ENCODE measurements at regions of chr5 and their contacts with region 1.

Region 1: DNA sequence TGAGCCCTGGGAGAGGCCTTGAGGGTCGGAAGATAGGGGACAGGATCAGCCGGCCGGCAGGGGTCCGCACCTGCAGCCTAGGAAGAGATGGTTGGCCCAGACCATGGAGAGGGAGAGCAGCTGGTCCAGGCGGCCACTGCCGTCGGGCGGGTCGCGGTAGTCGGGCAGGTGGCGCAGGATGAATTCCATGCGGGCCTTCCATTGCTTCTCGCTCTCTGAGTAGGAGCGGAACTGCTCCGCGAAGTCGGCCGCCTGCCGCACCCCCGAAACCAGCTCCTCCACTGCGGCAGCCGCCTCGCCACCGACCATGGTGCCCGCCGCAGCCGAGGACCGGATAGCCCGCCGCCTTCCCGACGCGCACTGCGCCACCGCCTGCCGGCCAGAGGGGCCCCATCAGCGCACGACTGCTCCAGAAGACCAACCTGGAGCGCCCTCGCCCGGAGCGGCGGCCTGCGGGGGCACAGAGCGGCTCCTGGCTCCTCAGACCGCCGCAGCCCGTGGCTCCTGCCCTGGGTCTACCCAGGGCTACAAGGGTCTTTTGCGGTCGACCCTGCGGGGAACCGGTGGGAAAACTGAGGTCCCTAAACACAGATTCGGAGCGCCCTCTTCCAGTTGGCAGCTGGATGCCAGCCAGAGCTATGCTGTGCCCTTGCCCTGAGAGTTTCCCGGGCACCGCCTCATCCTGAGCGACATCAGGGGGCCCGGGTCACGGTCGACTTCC is at the start of gene CDKN2AIPNL:
- DNase-seq: peak; percentile 96
- total RNA-seq, gene CDKN2AIPNL: 27.2 TPM

Region 2: DNA sequence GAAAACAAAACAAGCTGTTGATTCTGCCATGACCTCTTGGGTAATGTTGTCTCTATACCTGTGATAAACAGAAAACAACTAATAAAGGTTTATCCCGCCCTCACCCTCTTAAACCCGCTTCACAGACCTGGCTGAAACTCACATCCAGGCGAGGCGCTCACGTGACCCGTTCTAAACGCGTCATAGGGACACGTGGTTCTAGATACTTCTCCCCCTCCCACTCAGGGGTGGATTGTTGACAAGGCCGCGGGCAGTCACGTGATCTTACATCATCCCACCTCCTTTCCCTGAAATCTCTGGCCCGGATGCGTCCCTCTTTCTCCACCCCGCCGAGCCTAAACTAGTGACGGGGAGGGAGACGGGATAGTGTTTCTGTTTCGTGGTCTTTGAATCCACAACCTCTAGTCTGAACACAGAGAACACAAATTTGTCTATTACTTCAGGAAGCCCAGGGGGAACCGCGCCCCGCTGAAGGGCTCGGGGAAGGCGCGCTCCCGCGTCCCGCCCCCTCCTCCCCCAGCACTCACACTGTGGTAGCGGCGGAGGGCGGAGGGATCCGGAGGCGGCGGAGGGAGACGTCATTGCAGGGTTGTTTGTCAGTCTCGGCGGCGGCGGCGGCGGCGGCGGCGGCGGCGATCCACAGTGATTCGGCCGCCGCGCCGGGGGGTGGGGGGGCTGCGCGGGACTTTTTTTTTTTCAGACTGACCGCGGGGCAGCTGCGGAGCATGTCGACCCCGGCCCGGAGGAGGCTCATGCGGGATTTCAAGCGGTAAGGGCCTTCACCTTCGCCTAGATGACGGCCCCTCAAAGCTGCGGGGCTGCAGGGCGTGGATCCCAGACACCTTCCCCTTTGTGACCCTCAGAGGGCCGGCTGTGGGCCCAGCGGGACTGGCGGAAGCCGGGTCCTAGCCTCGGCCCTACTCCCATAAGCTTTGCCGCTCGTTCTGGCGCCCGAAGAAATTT is 40.6 kb before region 1 on chr5 and contains the start of gene UBE2B:
- intact Hi-C with region 1: loop called (anchors 2 kb)
- DNase-seq: peak; percentile 99
- total RNA-seq, gene UBE2B: 180 TPM

Region 3: GRCh38 chr5:134465816-134466240 is 54.1 kb after region 1 on chr5:
- intact Hi-C with region 1: loop called (anchors 2 kb)
- DNase-seq: peak; percentile 95

Region 4: DNA sequence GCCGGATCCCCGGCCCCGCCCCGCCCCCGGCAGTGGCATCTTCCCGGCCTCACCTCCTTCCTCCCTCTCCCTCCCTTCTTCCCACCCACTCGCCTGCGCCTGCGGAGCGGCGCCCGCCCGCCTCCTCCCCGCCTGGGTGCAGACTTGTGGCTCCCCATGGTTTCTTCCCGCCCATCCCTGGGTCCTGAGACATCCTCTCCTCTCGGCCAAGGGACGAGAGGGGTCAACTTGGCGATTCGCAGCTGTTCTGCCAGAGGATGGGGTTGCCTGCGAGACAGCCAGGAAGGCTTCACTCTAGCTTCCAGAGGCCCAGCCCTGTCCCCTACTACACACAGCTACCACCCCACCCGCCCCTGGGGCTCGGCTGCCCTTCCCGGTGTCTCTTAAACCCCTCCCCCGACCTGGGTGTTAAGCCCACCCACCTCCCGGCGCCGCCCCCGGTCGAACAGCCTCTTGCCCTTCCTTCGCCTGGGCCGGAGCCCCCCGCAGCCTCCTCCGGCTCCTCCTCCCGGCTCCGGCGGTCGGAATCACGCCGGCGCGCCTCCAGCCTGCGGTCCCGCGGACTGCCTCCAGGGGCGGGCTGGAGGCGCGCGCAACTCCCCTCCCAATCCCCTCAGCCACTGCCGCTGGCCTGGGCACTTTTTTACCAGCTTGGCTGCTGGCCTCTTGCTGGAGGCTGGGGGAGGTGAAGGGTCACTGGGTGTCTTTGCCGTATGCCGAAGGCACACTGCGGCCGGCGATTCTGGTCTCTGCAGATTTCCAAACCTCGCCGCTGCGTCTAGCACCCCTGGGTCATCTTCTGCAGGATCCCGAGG is 115.6 kb after region 1 on chr5:
- intact Hi-C with region 1: loop called (anchors 1 kb)
- DNase-seq: peak; percentile 93